HCT116 (cell line): ENCODE measurements at regions of chr17 and their contacts with region 1.

Region 1: GRCh38 chr17:48024937-48025906 is 12.4 kb downstream of the COPZ2 start:
- DNase-seq: peak; percentile 98
- ATAC-seq: peak; percentile 73
- H3K4me3 ChIP-seq: peak overlapping the region; percentile 61 to 62
- H3K27ac ChIP-seq: peak overlapping the region; percentile 93
- H3K4me1 ChIP-seq: peaks cover 26 to 45% of the 10 kb centered on the region in 2 experiments
- H3K27me3 ChIP-seq: no peaks in the 10 kb centered on the region
- CTCF ChIP-seq: peak in 2 of 3 experiments; percentile 87 to 92; a peak in 4 of 6 replicates
- POLR2A ChIP-seq: peak; percentile 69
- RAD21 ChIP-seq: no peak

Region 2: DNA sequence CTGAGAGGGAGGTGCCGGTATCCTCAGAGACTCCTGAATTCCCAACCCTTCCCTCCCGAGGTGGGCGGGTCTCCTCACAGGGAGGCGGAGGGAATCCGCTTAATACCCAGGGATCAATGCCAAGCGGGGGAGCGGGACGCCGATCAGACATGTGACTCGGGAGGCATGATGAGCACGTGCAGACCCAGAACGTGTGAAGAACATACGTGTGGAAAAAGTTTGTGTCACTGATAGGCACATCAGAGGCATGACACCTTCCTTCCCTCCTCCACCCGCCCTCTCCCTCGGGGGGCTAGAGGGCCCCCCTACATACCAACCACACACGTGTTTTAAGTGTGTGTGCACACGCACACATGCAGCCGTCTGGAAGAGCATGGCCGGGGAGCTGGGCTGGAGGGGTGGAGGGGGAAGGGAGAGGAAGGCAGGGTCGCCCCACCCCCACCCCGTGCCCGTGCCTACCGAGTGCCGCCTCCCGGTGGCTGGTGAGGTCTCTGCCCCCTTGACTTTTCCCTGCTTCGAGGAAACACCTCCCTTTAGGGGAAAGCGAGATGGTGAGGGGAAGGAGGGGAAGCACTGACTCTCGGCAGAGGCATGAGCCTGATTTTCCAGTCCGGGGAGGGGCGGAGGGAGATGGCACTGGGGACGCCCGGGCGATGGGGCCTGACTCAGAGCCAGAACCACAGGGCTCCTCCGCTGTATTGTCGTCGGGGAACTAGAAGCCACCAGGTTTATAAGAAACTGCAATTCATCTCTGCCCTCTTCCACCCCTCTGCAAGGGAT is 304.3 kb before region 1 on chr17:
- CTCF ChIA-PET with region 1: no interaction called
- POLR2A ChIA-PET with region 1: no interaction called
- RAD21 ChIA-PET with region 1: no interaction called
- intact Hi-C with region 1: no loop called
- DNase-seq: peak; percentile 24
- ATAC-seq: peak; percentile 49
- H3K4me3 ChIP-seq: peak overlapping the region; percentile 8 to 23; a peak in 2 of 4 replicates
- H3K27ac ChIP-seq: no peak overlapping the region
- H3K4me1 ChIP-seq: peaks cover 18 to 47% of the 10 kb centered on the region in 2 experiments
- H3K27me3 ChIP-seq: peaks cover 23% of the 10 kb centered on the region; the same call in 1 of the 2 replicates
- CTCF ChIP-seq: peak in 1 of 3 experiments; percentile 24; a peak in 1 of 6 replicates
- POLR2A ChIP-seq: no peak
- RAD21 ChIP-seq: no peak

Region 3: GRCh38 chr17:47821424-47822391 is 203.5 kb before region 1 on chr17 and contains the start of gene OSBPL7:
- CTCF ChIA-PET with region 1: no interaction called
- POLR2A ChIA-PET with region 1: no interaction called
- RAD21 ChIA-PET with region 1: no interaction called
- intact Hi-C with region 1: no loop called
- DNase-seq: peak; percentile 63
- ATAC-seq: peak; percentile 91
- H3K4me3 ChIP-seq: peak within 1 kb of the TSS; percentile 70 to 87
- H3K27ac ChIP-seq: peak within 1 kb of the TSS; percentile 47
- H3K4me1 ChIP-seq: peaks cover 16 to 27% of the 10 kb centered on the region in 2 experiments
- H3K27me3 ChIP-seq: no peaks in the 10 kb centered on the region
- CTCF ChIP-seq: peak; percentile 7 to 62 (median 49); a peak in 4 of 6 replicates
- POLR2A ChIP-seq: peak; percentile 59
- RAD21 ChIP-seq: no peak
- total RNA-seq, gene OSBPL7: 20.5 TPM

Region 4: DNA sequence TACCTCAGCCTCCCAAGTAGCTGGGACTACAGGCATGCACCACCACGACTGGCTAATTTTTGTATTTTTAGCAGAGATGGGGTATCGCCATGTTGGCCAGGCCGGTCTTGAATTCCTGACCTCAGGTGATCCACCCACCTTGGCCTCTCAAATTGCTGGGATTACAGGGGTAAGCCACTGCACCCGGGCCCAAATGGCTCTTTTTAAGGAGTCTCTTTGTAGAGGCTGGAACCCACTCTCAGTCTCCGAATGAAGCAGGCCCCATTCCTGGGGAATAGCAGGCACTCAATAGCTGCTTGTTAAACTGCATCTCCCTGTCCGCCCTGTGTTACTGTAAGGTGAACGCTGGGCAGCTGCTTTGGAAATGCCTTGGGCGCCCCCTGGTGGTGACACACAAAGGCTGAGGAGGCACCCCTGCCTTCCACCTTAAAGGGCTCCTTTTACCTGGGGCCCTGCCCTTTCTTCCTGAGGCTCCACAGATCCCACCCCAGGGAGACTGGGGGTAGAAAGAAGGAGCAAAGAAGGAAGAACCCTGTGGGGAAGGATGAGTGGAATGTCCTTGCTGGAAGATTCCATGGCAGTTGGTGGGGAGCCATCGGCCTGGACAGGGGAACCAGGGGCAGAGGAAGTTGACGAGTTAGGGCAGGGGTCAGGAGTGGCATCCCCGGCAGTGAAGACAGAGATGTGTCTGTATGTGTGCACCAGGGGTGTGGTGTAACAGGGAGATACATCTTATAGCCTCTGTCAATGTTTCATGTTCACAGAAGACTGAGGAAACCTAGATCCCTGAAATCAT is 135.3 kb before region 1 on chr17:
- CTCF ChIA-PET with region 1: no interaction called
- POLR2A ChIA-PET with region 1: no interaction called
- RAD21 ChIA-PET with region 1: no interaction called
- intact Hi-C with region 1: no loop called
- DNase-seq: peak; percentile 78
- ATAC-seq: peak; percentile 99
- H3K4me3 ChIP-seq: no peak overlapping the region
- H3K27ac ChIP-seq: no peak overlapping the region
- H3K4me1 ChIP-seq: peaks cover 0 to 32% of the 10 kb centered on the region in 2 experiments; a peak in 2 of 4 replicates
- H3K27me3 ChIP-seq: no peaks in the 10 kb centered on the region
- CTCF ChIP-seq: peak; percentile 97 to 100 (median 98)
- POLR2A ChIP-seq: no peak
- RAD21 ChIP-seq: peak; percentile 100

Region 5: GRCh38 chr17:48074315-48075081 is 49.3 kb after region 1 on chr17:
- CTCF ChIA-PET with region 1: interaction called, 79 read pairs
- POLR2A ChIA-PET with region 1: interaction called, 6 read pairs
- RAD21 ChIA-PET with region 1: interaction called, 3 read pairs
- intact Hi-C with region 1: loop called (anchors 1 kb)
- DNase-seq: peak; percentile 69
- ATAC-seq: peak; percentile 86
- H3K4me3 ChIP-seq: no peak overlapping the region
- H3K27ac ChIP-seq: peak overlapping the region; percentile 21; the same call in 1 of the 2 replicates
- H3K4me1 ChIP-seq: 0 out of 4 replicates have a peak, but pooled peaks cover 0 to 2% of the 10 kb centered on the region in 2 experiments
- H3K27me3 ChIP-seq: no peaks in the 10 kb centered on the region
- CTCF ChIP-seq: peak; percentile 89 to 97 (median 94)
- POLR2A ChIP-seq: no peak
- RAD21 ChIP-seq: peak; percentile 92

Region 6: GRCh38 chr17:48131216-48131824 is 106.1 kb after region 1 on chr17:
- CTCF ChIA-PET with region 1: interaction called, 171 read pairs
- POLR2A ChIA-PET with region 1: interaction called, 5 read pairs
- RAD21 ChIA-PET with region 1: interaction called, 16 to 19 read pairs
- intact Hi-C with region 1: loop called (anchors 1 kb)
- DNase-seq: peak; percentile 80
- ATAC-seq: peak; percentile 86
- H3K4me3 ChIP-seq: no peak overlapping the region
- H3K27ac ChIP-seq: no peak overlapping the region
- H3K4me1 ChIP-seq: peaks cover 16 to 20% of the 10 kb centered on the region in 2 experiments
- H3K27me3 ChIP-seq: no peaks in the 10 kb centered on the region
- CTCF ChIP-seq: peak; percentile 95 to 99 (median 96)
- POLR2A ChIP-seq: no peak
- RAD21 ChIP-seq: peak; percentile 98

Region 7: GRCh38 chr17:48335858-48336500 is 310.8 kb after region 1 on chr17:
- CTCF ChIA-PET with region 1: interaction called, 8 read pairs
- POLR2A ChIA-PET with region 1: no interaction called
- RAD21 ChIA-PET with region 1: no interaction called
- intact Hi-C with region 1: loop called (anchors 10 kb)
- DNase-seq: peak; percentile 78
- ATAC-seq: peak; percentile 85
- H3K4me3 ChIP-seq: no peak overlapping the region
- H3K27ac ChIP-seq: no peak overlapping the region
- H3K4me1 ChIP-seq: peaks cover 0 to 9% of the 10 kb centered on the region in 2 experiments; a peak in 2 of 4 replicates
- H3K27me3 ChIP-seq: no peaks in the 10 kb centered on the region
- CTCF ChIP-seq: peak; percentile 64 to 93 (median 92)
- POLR2A ChIP-seq: no peak
- RAD21 ChIP-seq: peak; percentile 85

Region 8: DNA sequence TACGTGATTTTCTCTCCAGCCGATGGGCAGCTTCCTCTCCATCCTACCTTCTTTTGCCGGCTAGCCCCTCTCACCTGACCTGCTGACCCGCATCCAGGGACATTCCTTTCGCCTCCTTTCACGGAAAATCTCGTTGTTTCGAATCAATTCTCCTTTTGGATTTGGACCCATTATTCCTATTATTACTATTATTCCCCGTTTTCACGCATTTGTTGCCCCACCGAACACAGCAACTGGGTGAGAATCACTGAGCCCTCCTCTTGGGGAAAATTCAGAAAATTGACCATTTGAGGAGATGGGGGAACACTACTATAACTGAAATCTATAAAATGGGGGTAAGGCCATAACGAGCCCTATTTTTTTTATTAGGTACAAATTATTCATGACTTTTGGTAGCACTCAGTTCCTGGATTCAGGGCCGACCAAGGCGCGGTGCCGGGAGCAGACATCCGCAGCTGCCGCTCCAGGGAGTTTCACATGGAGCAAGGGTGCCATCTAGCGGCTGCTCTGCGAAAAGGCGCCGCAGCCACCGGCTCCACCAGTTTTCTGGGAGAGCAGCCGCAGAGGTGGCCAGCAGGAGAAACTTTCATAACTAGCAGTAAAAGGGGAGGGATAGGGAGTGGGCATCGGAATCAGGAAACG is 593.2 kb after region 1 on chr17:
- CTCF ChIA-PET with region 1: interaction called, 12 read pairs
- POLR2A ChIA-PET with region 1: interaction called, 3 read pairs
- RAD21 ChIA-PET with region 1: no interaction called
- intact Hi-C with region 1: loop called (anchors 2 kb)
- DNase-seq: peak; percentile 74
- ATAC-seq: peak; percentile 71
- H3K4me3 ChIP-seq: peak overlapping the region; percentile 80 to 90
- H3K27ac ChIP-seq: peak overlapping the region; percentile 88
- H3K4me1 ChIP-seq: peaks cover 8 to 37% of the 10 kb centered on the region in 2 experiments; a peak in 3 of 4 replicates
- H3K27me3 ChIP-seq: no peaks in the 10 kb centered on the region
- CTCF ChIP-seq: peak; percentile 97 to 100 (median 98); a peak in 5 of 6 replicates
- POLR2A ChIP-seq: no peak
- RAD21 ChIP-seq: peak; percentile 99